ENCODE measurements at regions of chr6 and their contacts with region 1.

Region 1: GRCh38 chr6:24581084-24581669 is 64.8 kb downstream of the KIAA0319 start:
- DNase-seq: peak; percentile 61 to 88
- H3K4me3 ChIP-seq: no peak overlapping the region
- H3K4me1 ChIP-seq: peaks cover 13% of the 10 kb centered on the region
- H3K27me3 ChIP-seq: no peaks in the 10 kb centered on the region

Region 2: DNA sequence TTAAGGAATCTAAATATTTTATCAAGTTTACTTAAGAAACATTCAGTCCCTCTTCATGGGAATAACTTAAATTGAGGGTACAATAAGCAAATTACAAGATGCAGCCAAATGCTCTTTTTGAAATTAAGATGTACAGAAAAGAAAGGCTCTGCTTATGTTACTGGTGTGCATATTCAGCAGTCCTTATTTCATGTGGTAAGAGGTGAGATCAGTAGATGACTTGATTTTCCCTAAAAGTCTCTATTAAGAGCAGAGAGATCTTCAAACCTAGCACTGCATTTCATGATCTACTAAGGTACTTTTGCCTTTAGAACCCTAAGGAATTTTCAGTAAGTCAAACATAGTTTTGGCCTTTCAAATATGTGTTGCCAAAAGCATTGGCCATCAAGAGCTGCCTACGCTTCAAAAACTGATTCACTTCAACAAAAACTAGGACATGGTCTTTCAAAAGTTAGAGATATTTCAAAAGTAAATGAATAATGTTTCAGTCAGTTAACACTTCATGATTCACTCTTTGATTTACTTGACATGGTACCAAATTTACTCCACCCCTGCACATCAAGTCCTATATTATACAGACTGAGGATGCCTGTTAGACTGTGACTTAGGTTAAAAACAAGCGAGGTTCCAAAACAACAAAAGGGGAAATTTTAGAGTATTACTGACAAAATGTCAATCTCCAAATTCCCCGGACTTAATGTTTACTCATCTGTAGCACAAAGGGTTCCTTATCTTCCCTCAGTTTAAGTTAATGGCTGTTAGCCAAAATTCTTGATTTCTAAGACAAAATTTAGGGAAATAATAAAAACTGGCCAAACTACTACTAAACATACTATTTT is 118.6 kb after region 1 on chr6:
- in situ Hi-C with region 1: loop called (anchors 5 kb)
- DNase-seq: no peak
- H3K4me3 ChIP-seq: no peak overlapping the region
- H3K4me1 ChIP-seq: peaks cover 9% of the 10 kb centered on the region
- H3K27me3 ChIP-seq: no peaks in the 10 kb centered on the region